ENCODE measurements at regions of chr9 and their contacts with region 1.

Region 1: DNA sequence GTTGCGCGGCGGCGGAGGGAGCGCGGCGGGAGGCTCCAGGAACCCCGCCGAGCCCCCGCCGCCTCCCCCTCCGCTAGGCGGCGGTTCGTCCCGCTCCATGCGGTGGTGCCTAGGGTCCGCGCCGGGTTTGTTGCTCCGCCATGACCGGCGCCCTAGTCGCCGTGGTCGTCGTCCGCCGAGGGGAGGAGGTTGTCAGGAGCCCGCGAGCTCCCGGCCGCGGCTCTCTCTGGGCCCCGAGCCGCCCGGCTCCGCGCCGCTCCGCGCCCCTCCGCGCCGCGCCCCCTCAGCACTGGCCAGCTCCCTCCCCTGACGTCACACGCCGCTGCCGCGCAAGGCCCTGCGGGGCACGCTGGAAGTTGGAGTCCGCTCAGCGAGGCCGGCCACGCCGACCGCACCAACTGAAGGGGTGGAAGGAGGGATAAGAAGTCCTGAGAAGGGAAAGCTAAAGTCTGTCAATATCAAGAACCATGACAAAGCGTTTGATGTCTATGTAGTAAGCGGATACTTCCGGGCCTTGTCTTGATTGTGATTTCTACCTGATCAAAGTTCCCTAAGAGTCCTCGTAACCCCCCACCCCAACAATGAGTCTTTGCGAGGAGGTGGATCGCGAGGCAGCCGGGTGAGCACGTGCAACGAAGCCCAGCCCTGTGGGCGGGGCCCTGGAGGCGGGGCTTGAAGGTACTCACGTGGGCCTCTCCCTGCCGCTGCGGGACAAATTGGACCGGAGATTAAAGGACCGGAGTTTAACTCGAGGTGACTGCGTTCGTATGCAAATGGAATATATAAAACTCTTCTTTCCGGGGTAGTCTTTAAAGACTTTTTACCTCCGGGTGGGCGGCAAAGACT is at the start of gene NR6A1:
- DNase-seq: peak; percentile 97
- H3K4me3 Mint-ChIP-seq: peak within 1 kb of the TSS; percentile 99
- H3K27ac Mint-ChIP-seq: peak within 1 kb of the TSS; percentile 99
- H3K4me1 Mint-ChIP-seq: peaks cover 25% of the 10 kb centered on the region
- H3K27me3 Mint-ChIP-seq: peaks cover 6% of the 10 kb centered on the region
- CTCF ChIP-seq: no peak
- total RNA-seq, gene NR6A1: 0.91 and 2.0 TPM in 2 replicates

Region 2: DNA sequence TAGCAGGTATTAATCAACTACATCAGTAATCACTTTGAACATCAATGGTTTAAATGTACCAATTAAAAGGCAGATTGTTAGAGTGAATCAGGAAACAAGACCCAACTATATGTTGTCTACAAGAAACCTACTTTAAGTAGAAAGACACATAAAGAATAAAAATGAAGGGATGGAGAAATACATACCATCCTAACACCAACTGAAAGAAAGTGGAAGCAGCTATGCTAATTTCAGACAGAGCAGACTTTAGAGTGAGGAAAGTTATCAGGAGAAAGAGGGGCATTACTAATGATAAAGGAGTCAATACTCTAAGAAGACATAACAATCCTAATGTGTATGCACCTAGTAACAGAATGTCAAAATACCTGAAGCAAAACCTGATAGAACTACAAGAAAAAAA is 126.0 kb before region 1 on chr9:
- CTCF ChIA-PET with region 1: no interaction called
- POLR2A ChIA-PET with region 1: no interaction called
- intact Hi-C with region 1: no loop called
- DNase-seq: no peak
- H3K4me3 Mint-ChIP-seq: no peak overlapping the region
- H3K27ac Mint-ChIP-seq: no peak overlapping the region
- H3K4me1 Mint-ChIP-seq: no peaks in the 10 kb centered on the region
- H3K27me3 Mint-ChIP-seq: no peaks in the 10 kb centered on the region
- CTCF ChIP-seq: no peak

Region 3: GRCh38 chr9:124786881-124787573 is 15.8 kb after region 1 on chr9:
- CTCF ChIA-PET with region 1: interaction called, 13 read pairs
- POLR2A ChIA-PET with region 1: no interaction called
- intact Hi-C with region 1: no loop called
- DNase-seq: no peak
- H3K4me3 Mint-ChIP-seq: no peak overlapping the region
- H3K27ac Mint-ChIP-seq: no peak overlapping the region
- H3K4me1 Mint-ChIP-seq: peaks cover 6% of the 10 kb centered on the region
- H3K27me3 Mint-ChIP-seq: no peaks in the 10 kb centered on the region
- CTCF ChIP-seq: no peak

Region 4: DNA sequence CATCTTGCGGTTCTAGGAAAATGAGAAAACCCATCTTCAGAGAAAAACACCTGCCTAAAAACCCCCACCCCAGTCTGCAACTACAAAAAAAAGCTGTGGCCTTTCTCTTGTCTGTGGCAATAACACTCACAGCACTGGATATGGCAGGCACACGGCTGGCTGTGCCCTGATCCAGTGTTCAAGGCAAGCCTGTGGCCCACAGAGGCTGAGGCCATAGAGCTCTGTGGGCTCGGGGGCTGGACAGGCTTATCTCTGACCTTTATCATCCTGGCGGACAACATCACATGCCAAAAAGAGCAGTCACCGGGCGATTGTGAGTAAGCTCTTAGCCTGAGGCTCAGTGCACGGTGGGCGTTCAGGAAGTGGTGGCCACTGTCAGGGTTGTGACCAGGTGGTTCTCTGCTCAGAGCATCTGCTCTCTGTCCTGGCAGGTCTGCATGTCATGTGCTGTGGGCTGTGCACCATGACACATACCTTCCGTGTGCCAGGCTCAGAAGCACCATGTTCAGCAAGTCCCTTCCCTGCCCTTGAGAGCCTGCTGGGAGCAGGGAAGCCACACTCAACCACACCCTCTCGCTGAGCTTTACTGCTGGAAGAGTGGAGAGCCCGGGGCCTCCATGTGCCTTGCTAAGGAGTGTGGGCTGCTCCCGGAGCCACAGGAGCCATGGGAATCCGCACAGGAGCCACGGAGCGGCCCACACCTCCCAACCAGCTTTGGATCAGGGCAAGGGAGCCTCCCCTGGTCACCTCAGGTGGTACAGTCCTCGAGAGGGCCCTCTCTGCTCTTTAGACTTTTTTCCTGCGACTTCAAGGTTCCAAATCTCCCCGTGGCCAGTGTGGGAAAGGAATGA is 47.4 kb after region 1 on chr9:
- CTCF ChIA-PET with region 1: interaction called, 112 read pairs
- POLR2A ChIA-PET with region 1: interaction called, 38 read pairs
- intact Hi-C with region 1: no loop called
- DNase-seq: peak; percentile 78
- H3K4me3 Mint-ChIP-seq: peak overlapping the region; percentile 15
- H3K27ac Mint-ChIP-seq: peak overlapping the region; percentile 89
- H3K4me1 Mint-ChIP-seq: peaks cover 19% of the 10 kb centered on the region
- H3K27me3 Mint-ChIP-seq: no peaks in the 10 kb centered on the region
- CTCF ChIP-seq: no peak

Region 5: GRCh38 chr9:124861342-124862229 is 90.3 kb after region 1 on chr9 and contains the starts of genes ARPC5L and RPL35:
- CTCF ChIA-PET with region 1: interaction called, 927 read pairs
- POLR2A ChIA-PET with region 1: interaction called, 299 read pairs
- intact Hi-C with region 1: no loop called
- DNase-seq: peak; percentile 93
- H3K4me3 Mint-ChIP-seq: peak within 1 kb of the TSS; percentile 81
- H3K27ac Mint-ChIP-seq: peak within 1 kb of the TSS; percentile 88
- H3K4me1 Mint-ChIP-seq: peaks cover 22% of the 10 kb centered on the region
- H3K27me3 Mint-ChIP-seq: no peaks in the 10 kb centered on the region
- CTCF ChIP-seq: no peak
- total RNA-seq, gene ARPC5L: 72.5 and 84.2 TPM in 2 replicates
- total RNA-seq, gene RPL35: 1,966 and 2,009 TPM in 2 replicates

Region 6: GRCh38 chr9:124894741-124895170 is 123.5 kb after region 1 on chr9:
- CTCF ChIA-PET with region 1: interaction called, 17 read pairs
- POLR2A ChIA-PET with region 1: no interaction called
- intact Hi-C with region 1: loop called (anchors 1 kb)
- DNase-seq: peak; percentile 54
- H3K4me3 Mint-ChIP-seq: no peak overlapping the region
- H3K27ac Mint-ChIP-seq: peak overlapping the region; percentile 74
- H3K4me1 Mint-ChIP-seq: peaks cover 5% of the 10 kb centered on the region
- H3K27me3 Mint-ChIP-seq: no peaks in the 10 kb centered on the region
- CTCF ChIP-seq: peak; percentile 47

Region 7: DNA sequence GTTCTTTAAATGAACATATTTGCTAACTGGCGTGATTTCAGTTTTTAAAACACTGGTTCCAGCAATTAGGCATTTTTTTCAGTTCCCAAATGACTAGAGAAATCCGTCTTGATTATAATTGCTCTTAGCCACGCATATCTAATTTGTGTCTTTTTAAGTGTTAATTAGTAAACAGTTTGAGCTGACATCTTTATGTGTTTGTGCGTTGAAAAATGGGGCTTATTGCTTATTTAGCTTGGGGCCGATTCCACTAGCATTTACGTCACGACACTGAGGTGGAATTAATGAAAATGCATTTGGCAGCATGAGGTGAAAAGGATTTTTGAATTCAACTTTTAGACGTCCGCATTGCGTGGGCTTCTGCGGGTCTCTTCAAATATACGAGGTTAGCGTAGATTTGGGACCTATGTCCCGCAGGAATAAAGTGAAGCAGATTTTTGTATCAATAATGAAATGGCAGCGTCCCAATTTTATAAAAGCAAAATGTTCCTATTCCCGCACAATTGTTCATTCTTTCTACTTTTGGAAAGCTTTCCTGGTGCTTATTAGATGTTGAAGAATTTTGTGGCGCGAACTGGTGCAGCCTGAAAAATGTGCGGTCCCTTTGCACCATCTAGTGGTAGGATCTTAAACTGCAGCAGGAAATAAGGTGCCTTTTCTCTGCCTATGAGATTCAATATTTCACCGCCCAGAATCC is 1719.8 kb after region 1 on chr9:
- CTCF ChIA-PET with region 1: no interaction called
- POLR2A ChIA-PET with region 1: no interaction called
- intact Hi-C with region 1: loop called (anchors 5 kb)
- DNase-seq: peak; percentile 66
- H3K4me3 Mint-ChIP-seq: no peak overlapping the region
- H3K27ac Mint-ChIP-seq: no peak overlapping the region
- H3K4me1 Mint-ChIP-seq: no peaks in the 10 kb centered on the region
- H3K27me3 Mint-ChIP-seq: no peaks in the 10 kb centered on the region
- CTCF ChIP-seq: peak; percentile 92